HepG2 (cell line): ENCODE measurements at regions of chr19 and their contacts with region 1.

Region 1: GRCh38 chr19:14073261-14073924 is 807 bp downstream of the MISP3 start:
- DNase-seq: no peak
- ATAC-seq: peak; percentile 46
- H3K4me3 ChIP-seq: peak overlapping the region; percentile 76 to 94 (median 80)
- H3K27ac ChIP-seq: peak overlapping the region; percentile 91
- H3K4me1 ChIP-seq: peaks cover 8% of the 10 kb centered on the region
- H3K27me3 ChIP-seq: no peaks in the 10 kb centered on the region; a peak in 2 of 5 replicates
- CTCF ChIP-seq: peak; percentile 32
- EP300 ChIP-seq: no peak
- POLR2A ChIP-seq: no peak
- RAD21 ChIP-seq: peak; percentile 75

Region 2: GRCh38 chr19:14006243-14006765 is 67.1 kb before region 1 on chr19 and contains the start of gene RFX1:
- CTCF ChIA-PET with region 1: no interaction called
- POLR2A ChIA-PET with region 1: interaction called, 15 read pairs
- in situ Hi-C with region 1: no loop called
- intact Hi-C with region 1: loop called (anchors 5 kb)
- DNase-seq: peak; percentile 100
- ATAC-seq: peak; percentile 92
- H3K4me3 ChIP-seq: peak within 1 kb of the TSS; percentile 87 to 97 (median 91)
- H3K27ac ChIP-seq: peak within 1 kb of the TSS; percentile 96
- H3K4me1 ChIP-seq: peaks cover 19% of the 10 kb centered on the region
- H3K27me3 ChIP-seq: no peaks in the 10 kb centered on the region; a peak in 1 of 5 replicates
- CTCF ChIP-seq: no peak
- EP300 ChIP-seq: no peak
- POLR2A ChIP-seq: no peak; a peak in 1 of 4 replicates
- RAD21 ChIP-seq: no peak
- total RNA-seq, gene RFX1: 1.3 and 1.4 TPM in 2 replicates

Region 3: DNA sequence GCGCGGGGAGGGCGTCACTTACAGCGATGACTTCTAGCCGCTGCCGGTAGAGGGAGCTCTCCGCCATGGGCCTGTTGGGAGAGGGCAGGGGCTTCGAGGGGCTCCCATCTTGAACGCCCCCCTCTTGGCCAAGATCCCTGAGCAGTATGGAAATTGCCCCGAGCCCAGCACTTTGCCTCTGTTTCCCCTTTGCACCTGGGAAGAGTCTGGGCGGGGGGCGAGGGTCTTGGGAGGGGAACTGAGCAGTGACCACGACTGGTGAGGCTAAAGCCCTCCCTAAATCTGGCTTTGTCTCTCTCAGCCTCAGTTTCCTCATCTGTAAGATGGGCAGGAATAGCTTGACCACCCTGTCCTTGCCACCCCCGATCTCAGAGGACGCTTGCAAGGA is 14.3 kb before region 1 on chr19:
- CTCF ChIA-PET with region 1: interaction called, 15 read pairs
- POLR2A ChIA-PET with region 1: interaction called, 62 read pairs
- in situ Hi-C with region 1: no loop called
- intact Hi-C with region 1: no loop called
- DNase-seq: no peak
- ATAC-seq: no peak
- H3K4me3 ChIP-seq: no peak overlapping the region
- H3K27ac ChIP-seq: peak overlapping the region; percentile 81
- H3K4me1 ChIP-seq: peaks cover 39% of the 10 kb centered on the region
- H3K27me3 ChIP-seq: no peaks in the 10 kb centered on the region
- CTCF ChIP-seq: peak; percentile 68
- EP300 ChIP-seq: no peak
- POLR2A ChIP-seq: no peak
- RAD21 ChIP-seq: no peak

Region 4: GRCh38 chr19:14097532-14098151 is 24.2 kb after region 1 on chr19:
- CTCF ChIA-PET with region 1: no interaction called
- POLR2A ChIA-PET with region 1: no interaction called
- in situ Hi-C with region 1: no loop called
- intact Hi-C with region 1: no loop called
- DNase-seq: no peak
- ATAC-seq: peak; percentile 73
- H3K4me3 ChIP-seq: no peak overlapping the region
- H3K27ac ChIP-seq: no peak overlapping the region
- H3K4me1 ChIP-seq: no peaks in the 10 kb centered on the region
- H3K27me3 ChIP-seq: no peaks in the 10 kb centered on the region
- CTCF ChIP-seq: peak; percentile 57
- EP300 ChIP-seq: no peak
- POLR2A ChIP-seq: no peak
- RAD21 ChIP-seq: peak; percentile 61

Region 5: GRCh38 chr19:14127929-14128509 is 54.6 kb after region 1 on chr19:
- CTCF ChIA-PET with region 1: no interaction called
- POLR2A ChIA-PET with region 1: no interaction called
- in situ Hi-C with region 1: no loop called
- intact Hi-C with region 1: no loop called
- DNase-seq: no peak
- ATAC-seq: no peak
- H3K4me3 ChIP-seq: no peak overlapping the region
- H3K27ac ChIP-seq: peak overlapping the region; percentile 21
- H3K4me1 ChIP-seq: peaks cover 24% of the 10 kb centered on the region
- H3K27me3 ChIP-seq: no peaks in the 10 kb centered on the region
- CTCF ChIP-seq: no peak
- EP300 ChIP-seq: no peak
- POLR2A ChIP-seq: 0 out of 4 replicates have a peak, but pooled peaks of 1 of the 2 experiments have one; percentile 34
- RAD21 ChIP-seq: no peak